ENCODE measurements at regions of chr10 and their contacts with region 1.

Region 1: GRCh38 chr10:96642973-96643372 is 56.2 kb upstream of the TM9SF3 start:
- DNase-seq: peak; percentile 95
- ATAC-seq: peak; percentile 86
- H3K4me3 Mint-ChIP-seq: no peak overlapping the region
- H3K27ac Mint-ChIP-seq: no peak overlapping the region
- H3K4me1 Mint-ChIP-seq: peaks cover 21% of the 10 kb centered on the region
- H3K27me3 Mint-ChIP-seq: no peaks in the 10 kb centered on the region
- CTCF ChIP-seq: peak; percentile 68

Region 2: DNA sequence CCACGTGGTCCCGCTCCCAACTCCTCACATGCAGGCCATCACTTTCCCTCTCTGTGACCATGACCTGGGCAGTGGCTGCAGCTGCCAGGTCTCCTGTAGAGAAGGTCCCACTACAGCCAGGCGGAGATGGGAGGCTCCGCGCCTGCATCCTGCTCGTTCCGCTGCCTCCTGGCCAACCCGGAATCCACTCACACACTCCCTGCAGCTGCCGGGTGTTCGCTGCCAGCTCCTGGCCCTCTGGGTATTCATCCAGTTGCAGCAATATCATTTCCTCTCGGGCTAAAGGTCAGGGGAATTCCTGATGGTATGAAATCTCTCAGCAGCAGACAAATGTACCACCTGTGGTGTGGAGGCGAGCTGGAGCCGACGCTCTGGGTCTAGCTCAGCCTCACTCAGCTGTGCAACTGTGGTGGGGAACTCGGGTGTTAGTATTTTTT is 194.9 kb before region 1 on chr10:
- CTCF ChIA-PET with region 1: no interaction called
- POLR2A ChIA-PET with region 1: no interaction called
- intact Hi-C with region 1: no loop called
- DNase-seq: no peak
- ATAC-seq: no peak
- H3K4me3 Mint-ChIP-seq: no peak overlapping the region
- H3K27ac Mint-ChIP-seq: no peak overlapping the region
- H3K4me1 Mint-ChIP-seq: no peaks in the 10 kb centered on the region
- H3K27me3 Mint-ChIP-seq: peaks cover 6% of the 10 kb centered on the region
- CTCF ChIP-seq: no peak

Region 3: DNA sequence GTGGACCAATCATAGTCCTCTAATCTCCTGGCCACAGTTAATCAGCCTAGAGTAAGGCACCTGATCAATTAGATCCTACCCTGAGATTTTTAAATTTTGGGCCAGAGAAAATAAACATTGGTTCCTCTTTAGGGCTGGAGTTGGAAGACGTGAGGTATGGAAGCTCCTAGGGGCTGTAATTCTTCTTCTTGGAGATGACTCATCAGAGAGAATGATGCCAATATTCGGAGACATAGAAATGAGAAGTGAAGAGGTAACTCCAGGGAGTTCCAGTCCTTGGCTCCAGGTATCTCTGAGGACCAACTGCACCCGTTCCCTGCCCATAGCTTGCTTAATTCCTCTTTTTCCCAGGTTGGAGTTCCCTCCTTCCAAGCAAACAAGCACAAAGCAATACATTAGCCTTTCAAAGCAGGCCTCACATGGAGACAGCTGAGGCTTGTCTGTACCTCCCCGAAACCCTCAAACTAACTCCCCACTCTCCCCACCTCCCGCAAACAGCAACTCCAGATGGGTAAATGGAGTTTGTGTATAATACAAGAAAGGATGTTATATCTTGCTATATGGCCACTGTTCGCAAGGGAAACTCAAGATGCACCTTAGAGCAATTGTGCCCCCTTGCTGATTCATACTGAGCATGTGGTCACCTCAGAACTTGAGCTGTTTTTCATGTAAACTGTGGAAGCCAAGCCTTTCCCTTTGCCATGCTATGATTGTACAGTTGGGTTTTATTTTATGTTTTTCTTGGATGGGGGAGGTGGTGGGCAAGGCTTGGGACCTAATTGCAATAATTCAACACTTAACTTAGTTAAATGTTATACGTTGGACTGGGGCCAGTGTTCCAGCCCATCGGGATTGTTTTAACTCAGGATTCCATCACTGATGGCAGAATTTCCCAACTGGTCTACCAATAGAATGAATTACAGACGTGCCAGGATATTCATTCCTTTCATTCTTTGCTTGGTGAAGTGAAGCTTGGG is 48.1 kb after region 1 on chr10:
- CTCF ChIA-PET with region 1: interaction called, 14 read pairs
- POLR2A ChIA-PET with region 1: no interaction called
- intact Hi-C with region 1: no loop called
- DNase-seq: peak; percentile 34
- ATAC-seq: peak; percentile 59
- H3K4me3 Mint-ChIP-seq: no peak overlapping the region
- H3K27ac Mint-ChIP-seq: no peak overlapping the region
- H3K4me1 Mint-ChIP-seq: peaks cover 35% of the 10 kb centered on the region
- H3K27me3 Mint-ChIP-seq: no peaks in the 10 kb centered on the region
- CTCF ChIP-seq: peak; percentile 12

Region 4: DNA sequence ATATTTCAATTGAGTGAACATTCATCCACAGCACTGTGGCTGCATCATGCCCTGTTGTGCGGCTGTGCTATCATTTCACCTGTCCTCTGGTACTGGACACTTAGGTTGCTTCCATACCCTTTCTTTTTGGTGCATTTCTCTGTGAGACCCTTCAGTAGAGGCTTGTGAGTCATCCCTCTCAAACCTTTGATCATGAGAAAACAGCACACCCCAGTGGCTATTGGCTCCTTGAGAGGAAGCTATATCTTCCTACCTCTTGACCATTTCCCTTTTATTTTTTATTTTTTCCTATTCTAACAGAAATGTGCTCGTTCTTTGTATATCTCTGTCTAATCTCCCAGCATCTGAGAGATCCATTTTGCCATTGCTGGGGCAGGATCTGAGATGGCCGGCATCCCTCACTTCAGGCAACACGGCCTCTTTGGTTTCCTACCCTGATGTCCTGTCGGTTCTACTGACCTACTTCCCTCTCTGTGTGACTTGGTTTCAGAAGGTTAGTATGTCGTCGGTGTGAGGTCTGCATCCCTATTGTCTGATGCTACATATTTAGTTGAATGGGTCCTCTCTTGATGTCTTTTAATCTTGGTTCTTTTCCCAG is 101.1 kb after region 1 on chr10:
- CTCF ChIA-PET with region 1: interaction called, 8 read pairs
- POLR2A ChIA-PET with region 1: interaction called, 3 read pairs
- intact Hi-C with region 1: loop called (anchors 5 kb)
- DNase-seq: no peak
- ATAC-seq: no peak
- H3K4me3 Mint-ChIP-seq: no peak overlapping the region
- H3K27ac Mint-ChIP-seq: no peak overlapping the region
- H3K4me1 Mint-ChIP-seq: peaks cover 10% of the 10 kb centered on the region
- H3K27me3 Mint-ChIP-seq: peaks cover 2% of the 10 kb centered on the region
- CTCF ChIP-seq: no peak

Region 5: DNA sequence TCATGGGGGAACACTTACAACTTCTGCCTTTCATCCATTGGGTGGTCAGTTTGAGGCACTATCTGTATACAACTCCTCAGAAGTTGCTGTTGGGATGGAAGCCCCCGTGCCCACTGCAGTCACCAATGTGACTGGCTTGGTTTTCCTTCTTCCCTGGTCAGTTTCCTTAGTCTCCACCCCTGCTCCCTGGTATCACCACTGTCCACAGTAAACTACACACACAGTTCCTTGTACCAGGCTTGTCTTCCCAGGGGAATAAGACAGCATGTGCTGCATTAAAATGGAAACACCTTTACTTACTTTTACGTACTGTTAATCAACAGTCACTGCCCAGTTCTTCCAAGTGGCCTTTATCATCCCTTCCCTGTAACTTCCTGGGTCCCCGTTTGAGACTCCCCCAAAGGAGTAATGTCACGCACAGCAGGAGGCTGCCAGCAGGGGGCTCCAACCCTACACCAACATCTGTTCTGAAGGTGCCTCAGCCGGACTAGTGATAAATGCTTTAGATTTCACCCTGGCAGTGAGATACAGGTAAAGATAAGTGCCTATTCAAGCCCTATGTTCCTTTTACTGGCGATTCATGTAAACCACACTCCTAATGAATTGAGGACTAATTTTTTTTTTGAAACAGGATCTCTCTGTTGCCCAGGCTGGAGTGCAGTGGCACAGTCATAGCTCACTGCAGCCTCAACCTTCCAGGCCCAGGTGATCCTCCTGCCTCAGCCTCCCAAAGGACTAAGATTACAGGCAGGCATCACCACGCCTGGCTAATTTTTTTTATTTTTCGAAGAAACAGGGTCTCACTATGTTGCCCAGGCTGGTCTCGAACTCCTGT is 122.7 kb after region 1 on chr10:
- CTCF ChIA-PET with region 1: interaction called, 12 read pairs
- POLR2A ChIA-PET with region 1: no interaction called
- intact Hi-C with region 1: no loop called
- DNase-seq: peak; percentile 90
- ATAC-seq: peak; percentile 97
- H3K4me3 Mint-ChIP-seq: no peak overlapping the region
- H3K27ac Mint-ChIP-seq: no peak overlapping the region
- H3K4me1 Mint-ChIP-seq: no peaks in the 10 kb centered on the region
- H3K27me3 Mint-ChIP-seq: no peaks in the 10 kb centered on the region
- CTCF ChIP-seq: peak; percentile 93

Region 6: GRCh38 chr10:96831867-96832720 is 189.1 kb after region 1 on chr10 and contains the start of gene LCOR:
- CTCF ChIA-PET with region 1: interaction called, 6 read pairs
- POLR2A ChIA-PET with region 1: interaction called, 3 read pairs
- intact Hi-C with region 1: loop called (anchors 5 kb)
- DNase-seq: peak; percentile 91
- ATAC-seq: peak; percentile 74
- H3K4me3 Mint-ChIP-seq: peak within 1 kb of the TSS; percentile 97
- H3K27ac Mint-ChIP-seq: peak within 1 kb of the TSS; percentile 97
- H3K4me1 Mint-ChIP-seq: peaks cover 49% of the 10 kb centered on the region
- H3K27me3 Mint-ChIP-seq: no peaks in the 10 kb centered on the region
- CTCF ChIP-seq: no peak
- total RNA-seq, gene LCOR: 20.6 to 24.3 TPM

Measured in activated CD8-positive, alpha-beta T cell treated with anti-CD3 and anti-CD28 coated beads for 36 hours (primary cell).